ENCODE measurements at regions of chr5 and their contacts with region 1.

Region 1: GRCh38 chr5:119367502-119368237 is 11.9 kb downstream of the TNFAIP8 start:
- DNase-seq: no peak
- H3K4me3 Mint-ChIP-seq: peak overlapping the region; percentile 60
- H3K27ac Mint-ChIP-seq: peak overlapping the region; percentile 98
- H3K4me1 Mint-ChIP-seq: peaks cover 87% of the 10 kb centered on the region
- H3K27me3 Mint-ChIP-seq: no peaks in the 10 kb centered on the region

Region 2: DNA sequence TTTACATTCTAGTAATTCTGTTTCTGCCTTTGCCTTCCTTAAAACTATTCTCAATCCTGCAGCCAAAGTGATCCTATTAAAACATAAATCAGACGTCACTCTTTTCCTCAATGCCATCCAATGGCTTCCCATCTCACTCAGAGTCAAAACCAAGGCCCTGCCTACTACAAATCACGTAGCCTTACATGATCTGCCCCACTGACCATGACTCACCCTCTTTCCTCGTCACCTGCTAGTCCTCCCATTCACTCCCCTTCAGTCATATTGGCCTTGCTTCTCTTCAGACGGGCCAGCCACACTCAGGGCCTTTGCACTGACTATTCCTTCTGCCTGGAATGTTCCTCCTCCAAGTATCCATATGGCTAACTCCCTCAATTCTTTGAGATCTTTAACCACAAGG is 335.8 kb before region 1 on chr5:
- CTCF ChIA-PET with region 1: no interaction called
- intact Hi-C with region 1: loop called (anchors 1 kb)
- DNase-seq: peak; percentile 42
- H3K4me3 Mint-ChIP-seq: no peak overlapping the region
- H3K27ac Mint-ChIP-seq: peak overlapping the region; percentile 89
- H3K4me1 Mint-ChIP-seq: peaks cover 46% of the 10 kb centered on the region
- H3K27me3 Mint-ChIP-seq: no peaks in the 10 kb centered on the region

Region 3: DNA sequence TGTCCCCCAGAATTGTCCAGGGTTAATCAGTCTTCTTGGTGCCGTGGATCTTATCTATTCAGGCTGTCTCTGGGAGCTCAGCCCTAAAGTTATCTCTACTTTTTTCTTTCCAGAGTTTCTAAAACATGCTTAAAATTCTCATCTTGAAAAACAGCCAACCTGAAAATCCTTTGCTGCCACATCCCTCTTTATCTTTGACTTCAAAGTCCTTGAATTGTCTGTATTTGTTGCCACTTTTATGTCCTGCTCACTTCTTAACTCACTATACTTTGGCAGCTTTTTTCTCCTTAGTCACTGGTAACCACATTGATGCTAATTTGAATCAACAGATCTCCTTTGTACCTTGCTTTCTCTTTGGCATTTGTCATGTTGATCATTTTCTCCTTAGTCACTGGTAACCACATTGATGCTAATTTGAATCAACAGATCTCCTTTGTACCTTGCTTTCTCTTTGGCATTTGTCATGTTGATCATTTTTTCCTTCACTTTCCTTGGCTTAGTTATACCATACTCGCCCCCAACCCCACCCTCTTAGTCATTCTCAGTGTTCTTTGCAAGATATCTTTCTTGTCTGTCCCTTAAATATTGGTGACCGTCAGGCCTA is 288.2 kb before region 1 on chr5:
- CTCF ChIA-PET with region 1: no interaction called
- intact Hi-C with region 1: loop called (anchors 1 kb)
- DNase-seq: peak; percentile 59
- H3K4me3 Mint-ChIP-seq: no peak overlapping the region
- H3K27ac Mint-ChIP-seq: peak overlapping the region; percentile 54
- H3K4me1 Mint-ChIP-seq: peaks cover 52% of the 10 kb centered on the region
- H3K27me3 Mint-ChIP-seq: no peaks in the 10 kb centered on the region

Region 4: DNA sequence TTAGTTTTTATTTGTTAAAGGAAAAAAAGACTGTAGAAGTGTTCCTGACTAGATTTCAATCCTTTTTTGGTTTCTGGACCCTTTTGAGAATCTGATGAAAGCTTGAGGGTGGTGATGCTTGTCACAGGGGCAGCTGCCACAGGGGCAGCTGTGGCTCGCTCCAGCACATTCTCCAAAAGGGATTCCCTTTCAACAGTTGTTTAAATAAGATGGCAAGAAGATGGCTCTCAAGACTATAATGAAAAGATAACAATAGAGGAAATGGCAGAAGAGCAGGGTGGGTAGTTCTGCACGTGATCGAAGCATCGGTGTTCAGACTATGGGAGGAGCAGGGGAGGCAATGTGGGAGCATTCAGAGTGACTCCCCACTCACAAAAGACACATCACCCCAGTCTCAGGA is 58.3 kb before region 1 on chr5:
- CTCF ChIA-PET with region 1: interaction called, 3 read pairs
- intact Hi-C with region 1: loop called (anchors 1 kb)
- DNase-seq: no peak
- H3K4me3 Mint-ChIP-seq: peak overlapping the region; percentile 21
- H3K27ac Mint-ChIP-seq: peak overlapping the region; percentile 95
- H3K4me1 Mint-ChIP-seq: peaks cover 96% of the 10 kb centered on the region
- H3K27me3 Mint-ChIP-seq: no peaks in the 10 kb centered on the region

Region 5: DNA sequence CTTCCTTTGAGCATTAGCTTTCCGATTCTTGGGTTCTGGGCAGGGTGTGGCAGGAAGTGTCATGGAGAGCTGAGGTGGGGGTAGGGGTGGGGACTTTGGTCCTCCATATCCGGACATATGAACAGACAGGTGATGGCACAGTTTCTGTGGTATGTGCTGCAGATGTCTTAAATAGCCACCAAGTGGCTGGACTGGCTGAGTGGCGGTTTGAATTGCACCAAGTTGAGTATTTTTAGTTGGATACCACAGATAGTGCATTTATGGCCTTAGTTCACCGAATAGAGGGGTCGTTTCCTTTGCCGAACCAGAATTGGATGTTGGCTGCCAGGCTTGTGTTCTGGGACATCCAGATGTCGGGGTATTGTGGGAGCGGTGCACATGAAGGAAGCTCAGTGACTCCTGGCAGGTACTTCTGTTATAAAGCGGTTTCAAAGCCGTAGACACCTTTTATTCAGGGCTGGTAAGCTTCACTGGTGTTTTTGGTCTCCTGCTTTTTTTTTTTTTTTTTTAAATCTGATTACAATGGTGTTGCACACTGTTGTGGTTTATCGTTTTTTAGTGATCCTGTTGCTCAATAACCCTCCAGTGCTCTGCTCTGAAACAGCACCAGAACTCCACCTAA is 27.0 kb before region 1 on chr5:
- CTCF ChIA-PET with region 1: interaction called, 5 read pairs
- intact Hi-C with region 1: loop called (anchors 1 kb)
- DNase-seq: peak; percentile 68
- H3K4me3 Mint-ChIP-seq: peak overlapping the region; percentile 69
- H3K27ac Mint-ChIP-seq: peak overlapping the region; percentile 96
- H3K4me1 Mint-ChIP-seq: peaks cover 93% of the 10 kb centered on the region
- H3K27me3 Mint-ChIP-seq: no peaks in the 10 kb centered on the region

Region 6: GRCh38 chr5:119355685-119356611 is 11.7 kb before region 1 on chr5 and contains the start of gene TNFAIP8:
- CTCF ChIA-PET with region 1: interaction called, 8 read pairs
- intact Hi-C with region 1: loop called (anchors 1 kb)
- DNase-seq: peak; percentile 91
- H3K4me3 Mint-ChIP-seq: peak within 1 kb of the TSS; percentile 98
- H3K27ac Mint-ChIP-seq: peak within 1 kb of the TSS; percentile 98
- H3K4me1 Mint-ChIP-seq: peaks cover 67% of the 10 kb centered on the region
- H3K27me3 Mint-ChIP-seq: no peaks in the 10 kb centered on the region
- total RNA-seq, gene TNFAIP8: 141 to 142 TPM

Region 7: DNA sequence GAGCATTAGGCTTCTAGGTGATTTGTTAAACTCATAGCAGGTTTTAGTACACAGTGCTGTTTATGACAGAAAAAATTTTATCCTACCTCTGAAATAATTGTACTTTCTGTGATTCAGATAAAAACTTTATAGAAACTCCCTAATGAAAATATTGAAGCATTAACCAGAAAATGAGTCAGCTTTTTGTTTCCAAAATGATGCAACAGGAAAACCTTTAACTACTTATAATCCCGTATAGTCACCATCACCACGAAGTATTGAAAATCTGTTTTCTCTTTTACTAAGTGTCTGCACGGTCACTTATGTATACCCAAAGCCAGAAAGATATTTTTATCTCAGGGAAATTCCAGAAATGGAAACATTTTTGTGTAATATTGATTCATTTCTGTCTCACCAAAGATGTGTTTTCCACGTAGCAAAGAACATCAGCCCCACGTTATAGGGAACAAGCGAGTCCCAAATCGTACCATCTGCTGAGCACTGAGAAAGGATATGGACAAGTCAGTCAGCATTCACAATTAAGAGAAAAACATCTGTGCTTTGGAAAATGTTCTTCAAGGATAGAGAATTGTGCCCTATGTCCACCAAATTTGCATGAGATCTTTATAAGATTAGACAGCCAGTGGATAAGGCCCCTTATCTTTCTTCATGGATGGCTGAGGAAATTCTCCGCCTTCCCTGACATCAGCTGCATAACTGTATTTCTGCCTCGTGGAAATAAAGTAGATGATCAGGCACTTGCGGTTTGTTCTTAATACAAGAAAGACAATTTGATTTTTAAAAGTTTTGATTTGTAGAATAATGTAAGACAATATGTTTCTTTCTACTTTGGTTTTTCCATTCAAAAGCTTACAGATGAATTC is 30.1 kb after region 1 on chr5:
- CTCF ChIA-PET with region 1: interaction called, 5 read pairs
- intact Hi-C with region 1: loop called (anchors 1 kb)
- DNase-seq: peak; percentile 55
- H3K4me3 Mint-ChIP-seq: peak overlapping the region; percentile 23
- H3K27ac Mint-ChIP-seq: peak overlapping the region; percentile 89
- H3K4me1 Mint-ChIP-seq: peaks cover 89% of the 10 kb centered on the region
- H3K27me3 Mint-ChIP-seq: no peaks in the 10 kb centered on the region

Region 8: DNA sequence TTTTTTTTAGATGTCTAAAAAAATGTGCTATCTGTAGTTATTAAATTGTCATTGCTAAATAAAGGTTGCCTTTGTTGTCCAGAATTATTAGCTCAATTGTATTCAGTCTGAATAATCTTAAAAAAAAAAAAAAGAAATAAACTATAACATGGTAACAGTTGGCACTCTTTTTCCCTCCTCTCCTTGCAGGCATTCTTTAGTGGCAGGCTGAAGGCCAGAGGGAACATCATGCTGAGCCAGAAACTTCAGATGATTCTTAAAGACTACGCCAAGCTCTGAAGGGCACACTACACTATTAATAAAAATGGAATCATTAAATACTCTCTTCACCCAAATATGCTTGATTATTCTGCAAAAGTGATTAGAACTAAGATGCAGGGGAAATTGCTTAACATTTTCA is 174.0 kb after region 1 on chr5:
- CTCF ChIA-PET with region 1: no interaction called
- intact Hi-C with region 1: no loop called
- DNase-seq: no peak
- H3K4me3 Mint-ChIP-seq: no peak overlapping the region
- H3K27ac Mint-ChIP-seq: no peak overlapping the region
- H3K4me1 Mint-ChIP-seq: peaks cover 7% of the 10 kb centered on the region
- H3K27me3 Mint-ChIP-seq: no peaks in the 10 kb centered on the region

Measured in activated naive CD4-positive, alpha-beta T cell treated with anti-CD3 and anti-CD28 coated beads for 36 hours (primary cell).